Naive thymus-derived CD8-positive, alpha-beta T cell (primary cell): ENCODE measurements at regions of chr22 and their contacts with region 1.

Region 1: DNA sequence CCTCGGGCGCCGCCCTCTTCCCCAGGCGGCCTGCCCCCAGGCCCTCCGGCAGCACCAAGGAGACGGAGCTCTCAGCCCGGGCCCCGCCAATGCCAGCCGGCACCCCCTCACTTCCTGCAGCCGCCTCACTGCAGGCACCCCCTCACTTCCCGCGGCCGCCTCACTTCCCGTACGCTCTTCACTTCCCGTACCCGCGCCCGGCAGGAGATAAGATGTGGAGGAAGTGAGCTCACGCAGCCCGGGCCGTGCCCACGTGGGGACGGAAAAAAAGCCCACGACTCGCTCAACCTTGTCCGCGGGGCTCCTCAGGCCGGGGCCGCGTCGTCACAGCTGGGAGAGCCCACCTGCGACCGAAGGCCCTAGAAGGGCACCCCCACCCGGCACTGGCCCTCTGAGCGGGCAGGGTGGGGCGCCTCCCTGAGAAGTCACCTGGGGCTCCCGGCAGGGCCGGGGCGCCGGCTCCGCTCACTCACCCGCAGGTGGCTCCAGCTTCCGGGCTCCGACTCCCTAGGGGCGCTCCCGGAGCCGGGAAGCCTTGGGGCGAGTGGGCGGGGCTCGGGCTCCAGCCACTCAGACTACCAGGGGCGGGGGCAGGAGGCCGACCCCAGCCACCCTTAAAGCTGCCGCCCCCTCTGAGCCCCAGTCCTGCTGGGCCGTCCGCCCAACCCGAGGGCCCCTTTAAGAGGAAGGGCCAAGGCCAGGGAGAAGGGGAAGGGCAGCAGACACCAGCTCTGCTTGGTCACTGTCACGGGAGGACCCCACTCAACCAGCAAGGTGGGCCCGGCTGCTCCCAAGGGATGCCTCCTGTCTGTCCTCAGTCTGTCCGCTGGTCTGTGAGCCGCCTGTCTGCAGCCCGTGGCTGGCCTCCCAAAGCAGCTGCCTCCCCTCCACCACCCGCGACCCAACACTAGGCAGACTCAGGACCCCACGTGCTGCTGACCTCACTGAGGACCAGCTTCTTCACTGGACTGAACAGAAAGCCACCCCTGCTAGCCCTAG is 31.4 kb downstream of the PISD start:
- DNase-seq: peak; percentile 82 to 94 (median 86)
- ATAC-seq: peak; percentile 90 to 94
- H3K4me3 Mint-ChIP-seq: peak overlapping the region; percentile 83 to 93 (median 88)
- H3K27ac Mint-ChIP-seq: peak overlapping the region; percentile 84 to 97 (median 94)
- H3K4me1 Mint-ChIP-seq: peaks cover 26 to 68% (median 55%) of the 10 kb centered on the region in 4 donors
- H3K27me3 Mint-ChIP-seq: no peaks in the 10 kb centered on the region

Region 2: GRCh38 chr22:31618471-31619176 is 12.0 kb before region 1 on chr22:
- POLR2A ChIA-PET with region 1: interaction called, 24 read pairs
- DNase-seq: no peak
- ATAC-seq: no peak
- H3K4me3 Mint-ChIP-seq: no peak overlapping the region
- H3K27ac Mint-ChIP-seq: peak overlapping the region in 6 of 10 donors; percentile 10 to 88 (median 63)
- H3K4me1 Mint-ChIP-seq: peaks cover 16 to 28% (median 20%) of the 10 kb centered on the region in 4 donors
- H3K27me3 Mint-ChIP-seq: no peaks in the 10 kb centered on the region

Region 3: GRCh38 chr22:31650391-31650790 is 19.8 kb after region 1 on chr22:
- POLR2A ChIA-PET with region 1: no interaction called
- DNase-seq: no peak
- ATAC-seq: no peak
- H3K4me3 Mint-ChIP-seq: no peak overlapping the region
- H3K27ac Mint-ChIP-seq: no peak overlapping the region
- H3K4me1 Mint-ChIP-seq: peaks cover 8 to 37% (median 17%) of the 10 kb centered on the region in 4 donors
- H3K27me3 Mint-ChIP-seq: no peaks in the 10 kb centered on the region

Region 4: GRCh38 chr22:31676700-31677099 is 46.1 kb after region 1 on chr22:
- POLR2A ChIA-PET with region 1: interaction called, 12 read pairs
- DNase-seq: peak; percentile 83 to 96 (median 88)
- ATAC-seq: peak; percentile 100
- H3K4me3 Mint-ChIP-seq: peak overlapping the region; percentile 90 to 99 (median 96)
- H3K27ac Mint-ChIP-seq: peak overlapping the region; percentile 94 to 99 (median 98)
- H3K4me1 Mint-ChIP-seq: peaks cover 13 to 20% (median 18%) of the 10 kb centered on the region in 4 donors
- H3K27me3 Mint-ChIP-seq: no peaks in the 10 kb centered on the region

Region 5: DNA sequence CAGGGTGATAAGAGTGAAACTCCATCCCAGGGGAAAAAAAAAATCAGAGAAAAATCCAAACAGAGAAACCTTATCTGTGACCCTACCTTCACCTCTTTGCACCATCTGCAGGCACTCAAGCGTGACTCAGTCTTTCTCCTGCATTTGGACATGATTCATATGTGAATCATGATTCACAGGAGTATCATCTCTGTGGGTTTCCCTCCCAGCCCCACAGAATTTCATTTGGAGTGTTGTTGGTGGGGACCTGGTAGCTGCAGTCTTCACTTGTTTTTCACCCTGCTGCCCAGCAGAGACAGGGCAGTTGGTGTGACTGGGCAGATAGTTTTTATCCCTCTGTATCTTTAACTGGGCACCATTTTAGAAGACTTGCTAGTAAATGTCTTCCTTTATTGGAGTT is 198.9 kb after region 1 on chr22:
- POLR2A ChIA-PET with region 1: no interaction called
- DNase-seq: no peak
- ATAC-seq: no peak
- H3K4me3 Mint-ChIP-seq: no peak overlapping the region
- H3K27ac Mint-ChIP-seq: no peak overlapping the region
- H3K4me1 Mint-ChIP-seq: peaks cover 0 to 6% (median 2%) of the 10 kb centered on the region in 4 donors
- H3K27me3 Mint-ChIP-seq: no peaks in the 10 kb centered on the region